ENCODE measurements at regions of chr19 and their contacts with region 1.

Region 1: DNA sequence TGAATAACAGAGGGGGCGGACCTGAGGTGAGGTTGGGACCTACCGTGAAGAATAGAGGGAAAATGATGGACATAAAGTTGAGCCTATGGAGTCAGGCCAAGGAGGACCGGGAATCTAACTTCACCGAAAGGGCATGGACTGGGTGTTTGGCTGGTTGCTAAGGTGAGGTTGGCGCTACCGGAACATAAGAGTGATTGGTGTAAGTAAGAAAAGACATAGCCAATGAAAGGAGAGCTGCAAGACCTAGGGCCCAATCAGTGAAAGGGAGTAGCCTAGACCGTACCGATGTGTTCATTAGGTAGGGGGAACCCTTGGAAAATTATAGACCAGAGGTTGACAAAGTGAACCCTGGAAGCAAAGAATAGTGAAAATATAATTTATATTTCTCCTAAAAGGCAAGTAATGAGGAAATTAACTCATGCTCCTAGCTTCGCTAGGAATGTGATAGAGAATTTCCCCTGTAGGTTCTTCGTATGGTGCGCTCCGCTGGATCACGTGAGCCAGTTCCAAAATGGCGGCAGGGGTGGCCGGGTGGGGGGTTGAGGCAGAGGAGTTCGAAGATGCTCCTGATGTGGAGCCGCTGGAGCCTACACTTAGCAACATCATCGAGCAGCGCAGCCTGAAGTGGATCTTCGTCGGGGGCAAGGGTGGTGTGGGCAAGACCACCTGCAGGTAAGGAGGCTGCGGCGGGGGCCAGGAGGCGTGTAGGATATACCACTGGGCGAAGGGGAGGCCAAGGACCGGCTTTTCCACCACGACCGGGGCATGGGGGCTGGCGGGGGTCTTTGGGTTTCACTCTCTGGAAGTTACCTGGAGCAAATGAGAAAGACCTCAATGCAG is at the start of gene GET3:
- DNase-seq: peak; percentile 83
- H3K4me3 Mint-ChIP-seq: peak within 1 kb of the TSS; percentile 100
- H3K27ac Mint-ChIP-seq: peak within 1 kb of the TSS; percentile 89
- H3K4me1 Mint-ChIP-seq: peaks cover 46% of the 10 kb centered on the region
- H3K27me3 Mint-ChIP-seq: no peaks in the 10 kb centered on the region
- total RNA-seq, gene GET3: 61.8 to 62.9 TPM

Region 2: GRCh38 chr19:12574036-12574435 is 163.2 kb before region 1 on chr19:
- CTCF ChIA-PET with region 1: no interaction called
- POLR2A ChIA-PET with region 1: no interaction called
- DNase-seq: no peak
- H3K4me3 Mint-ChIP-seq: no peak overlapping the region
- H3K27ac Mint-ChIP-seq: no peak overlapping the region
- H3K4me1 Mint-ChIP-seq: peaks cover 4% of the 10 kb centered on the region
- H3K27me3 Mint-ChIP-seq: no peaks in the 10 kb centered on the region

Region 3: GRCh38 chr19:12681074-12681951 is 55.9 kb before region 1 on chr19 and contains the start of gene DHPS:
- CTCF ChIA-PET with region 1: interaction called, 4 read pairs
- POLR2A ChIA-PET with region 1: interaction called, 18 read pairs
- DNase-seq: peak; percentile 94
- H3K4me3 Mint-ChIP-seq: peak within 1 kb of the TSS; percentile 94
- H3K27ac Mint-ChIP-seq: peak within 1 kb of the TSS; percentile 95
- H3K4me1 Mint-ChIP-seq: peaks cover 28% of the 10 kb centered on the region
- H3K27me3 Mint-ChIP-seq: no peaks in the 10 kb centered on the region
- total RNA-seq, gene DHPS: 106 to 113 TPM

Region 4: DNA sequence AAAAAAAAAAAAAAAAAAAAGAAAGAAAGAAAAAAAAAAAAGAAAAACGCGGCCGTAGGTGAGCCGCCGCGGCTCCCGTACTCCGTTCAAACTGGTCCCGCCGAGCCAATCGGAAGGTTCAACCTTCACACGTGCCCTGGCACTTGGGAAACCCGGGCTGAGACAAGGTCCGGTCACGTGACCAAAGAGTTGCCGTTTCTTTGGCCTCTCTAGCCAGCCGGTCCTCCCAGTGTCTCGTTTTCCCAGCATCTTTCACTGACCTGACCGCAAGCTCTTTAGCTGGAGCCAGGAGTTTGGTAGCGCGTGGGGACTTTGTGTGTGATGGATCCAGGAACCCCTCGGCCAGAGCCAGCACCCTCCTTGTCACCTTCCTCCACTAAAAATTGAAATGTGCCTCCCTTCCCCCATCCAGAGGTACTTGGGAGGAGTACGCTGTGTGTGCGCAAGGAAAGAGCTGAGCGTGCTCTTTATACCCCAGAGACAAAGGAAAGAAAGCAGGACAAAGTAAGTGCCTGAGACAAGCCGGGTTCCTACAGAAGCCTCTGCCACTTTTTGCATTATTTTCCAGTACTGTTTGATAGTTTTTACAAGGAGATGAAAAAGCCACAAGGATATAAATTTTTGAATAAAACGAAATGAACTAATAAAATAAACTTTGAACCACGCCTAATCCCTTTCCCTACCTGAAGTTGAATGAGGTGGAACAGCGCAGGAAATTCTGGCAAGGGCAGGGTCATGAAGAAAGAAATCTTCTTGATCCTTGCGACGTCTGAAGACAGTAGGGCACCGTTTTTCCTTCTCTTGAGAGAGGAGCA is 14.4 kb before region 1 on chr19:
- CTCF ChIA-PET with region 1: interaction called, 53 read pairs
- POLR2A ChIA-PET with region 1: interaction called, 250 read pairs
- DNase-seq: peak; percentile 95
- H3K4me3 Mint-ChIP-seq: peak overlapping the region; percentile 92
- H3K27ac Mint-ChIP-seq: peak overlapping the region; percentile 85
- H3K4me1 Mint-ChIP-seq: peaks cover 41% of the 10 kb centered on the region
- H3K27me3 Mint-ChIP-seq: no peaks in the 10 kb centered on the region

Region 5: DNA sequence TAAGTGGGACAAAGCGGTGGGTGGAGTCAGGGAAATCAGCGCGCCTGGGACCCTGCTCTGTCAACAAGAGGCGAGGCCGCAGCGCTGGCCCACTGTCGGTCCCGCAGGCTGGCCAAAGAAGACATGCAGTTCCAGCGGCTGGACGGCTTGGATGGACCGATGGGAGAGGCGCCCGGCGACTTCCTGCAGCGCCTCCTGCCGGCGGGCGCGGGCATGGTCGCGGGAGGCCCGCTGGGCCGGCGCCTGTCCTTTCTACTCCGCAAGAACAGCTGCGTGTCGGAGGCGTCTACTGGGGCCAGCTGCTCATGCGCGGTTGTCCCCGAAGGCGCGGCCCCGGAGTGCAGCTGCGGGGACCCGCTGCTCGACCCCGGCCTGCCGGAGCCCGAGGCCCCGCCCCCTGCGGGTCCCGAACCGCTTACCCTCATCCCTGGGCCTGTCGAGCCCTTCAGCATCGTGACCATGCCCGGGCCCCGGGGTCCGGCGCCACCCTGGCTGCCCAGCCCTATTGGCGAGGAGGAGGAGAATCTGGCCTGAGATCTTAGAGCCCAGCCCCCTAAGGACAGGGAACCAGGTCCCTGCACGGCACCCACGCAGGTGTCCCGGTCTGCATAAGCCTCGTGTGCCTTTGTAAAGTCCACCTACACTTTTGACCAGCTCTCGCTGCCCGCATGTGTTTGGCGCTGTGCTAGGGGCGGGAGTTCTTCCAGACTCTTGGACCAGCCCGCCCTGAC is 20.5 kb after region 1 on chr19:
- CTCF ChIA-PET with region 1: interaction called, 136 read pairs
- POLR2A ChIA-PET with region 1: interaction called, 10 read pairs
- DNase-seq: peak; percentile 71
- H3K4me3 Mint-ChIP-seq: peak overlapping the region; percentile 49
- H3K27ac Mint-ChIP-seq: no peak overlapping the region
- H3K4me1 Mint-ChIP-seq: peaks cover 11% of the 10 kb centered on the region
- H3K27me3 Mint-ChIP-seq: peaks cover 4% of the 10 kb centered on the region

Region 6: GRCh38 chr19:12777217-12778016 is 40.2 kb after region 1 on chr19:
- CTCF ChIA-PET with region 1: interaction called, 6 read pairs
- POLR2A ChIA-PET with region 1: interaction called, 13 read pairs
- DNase-seq: peak; percentile 85
- H3K4me3 Mint-ChIP-seq: peak overlapping the region; percentile 83
- H3K27ac Mint-ChIP-seq: peak overlapping the region; percentile 92
- H3K4me1 Mint-ChIP-seq: peaks cover 44% of the 10 kb centered on the region
- H3K27me3 Mint-ChIP-seq: no peaks in the 10 kb centered on the region

Region 7: GRCh38 chr19:12789904-12790619 is 52.8 kb after region 1 on chr19:
- CTCF ChIA-PET with region 1: interaction called, 10 read pairs
- POLR2A ChIA-PET with region 1: interaction called, 66 read pairs
- DNase-seq: peak; percentile 98
- H3K4me3 Mint-ChIP-seq: peak overlapping the region; percentile 93
- H3K27ac Mint-ChIP-seq: peak overlapping the region; percentile 98
- H3K4me1 Mint-ChIP-seq: peaks cover 45% of the 10 kb centered on the region
- H3K27me3 Mint-ChIP-seq: no peaks in the 10 kb centered on the region

Region 8: DNA sequence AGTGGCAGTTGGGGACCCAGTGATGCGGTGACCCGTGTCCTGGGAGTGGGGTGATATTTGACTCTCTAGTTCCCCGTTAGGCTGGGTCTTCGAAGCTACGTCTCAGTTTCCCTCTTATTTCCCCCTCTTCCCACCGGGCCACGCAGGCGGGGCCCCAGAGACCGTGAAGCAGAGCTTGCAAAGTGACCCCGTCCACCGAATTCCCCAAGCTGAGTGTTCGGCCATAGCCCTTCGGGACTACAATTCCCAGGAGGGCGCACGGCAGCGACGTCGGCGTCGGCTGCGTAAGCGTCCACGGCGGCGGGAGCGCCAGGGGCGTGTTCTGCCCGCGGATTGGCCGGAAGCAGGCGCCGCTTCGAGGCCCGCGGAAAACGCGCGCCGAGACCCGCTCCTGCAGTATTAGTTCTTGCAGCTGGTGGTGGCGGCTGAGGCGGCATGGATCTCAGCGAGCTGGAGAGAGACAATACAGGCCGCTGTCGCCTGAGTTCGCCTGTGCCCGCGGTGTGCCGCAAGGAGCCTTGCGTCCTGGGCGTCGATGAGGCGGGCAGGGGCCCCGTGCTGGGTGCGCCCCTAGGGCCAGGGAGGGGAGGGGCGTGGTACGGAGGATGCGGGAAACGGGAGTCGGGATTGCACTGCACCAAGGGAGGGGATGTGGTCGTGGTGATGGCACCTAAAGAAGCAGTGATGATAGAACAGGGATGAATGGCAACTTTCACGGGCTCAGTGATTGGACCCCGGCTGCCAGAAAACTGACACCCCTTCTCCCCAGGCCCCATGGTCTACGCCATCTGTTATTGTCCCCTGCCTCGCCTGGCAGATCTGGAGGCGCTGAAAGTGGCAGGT is 69.2 kb after region 1 on chr19 and contains the start of gene RNASEH2A:
- CTCF ChIA-PET with region 1: interaction called, 4 read pairs
- POLR2A ChIA-PET with region 1: interaction called, 14 read pairs
- DNase-seq: peak; percentile 92
- H3K4me3 Mint-ChIP-seq: peak within 1 kb of the TSS; percentile 95
- H3K27ac Mint-ChIP-seq: peak within 1 kb of the TSS; percentile 83
- H3K4me1 Mint-ChIP-seq: peaks cover 32% of the 10 kb centered on the region
- H3K27me3 Mint-ChIP-seq: no peaks in the 10 kb centered on the region
- total RNA-seq, gene RNASEH2A: 34.8 to 38.4 TPM

Measured in activated CD4-positive, alpha-beta memory T cell treated with anti-CD3 and anti-CD28 coated beads, Interleukin-2, amount 10 ng/mL, durations not matched to agents 7 days and 5 days (primary cell).